ENCODE measurements at regions of chr18 and their contacts with region 1.

Region 1: DNA sequence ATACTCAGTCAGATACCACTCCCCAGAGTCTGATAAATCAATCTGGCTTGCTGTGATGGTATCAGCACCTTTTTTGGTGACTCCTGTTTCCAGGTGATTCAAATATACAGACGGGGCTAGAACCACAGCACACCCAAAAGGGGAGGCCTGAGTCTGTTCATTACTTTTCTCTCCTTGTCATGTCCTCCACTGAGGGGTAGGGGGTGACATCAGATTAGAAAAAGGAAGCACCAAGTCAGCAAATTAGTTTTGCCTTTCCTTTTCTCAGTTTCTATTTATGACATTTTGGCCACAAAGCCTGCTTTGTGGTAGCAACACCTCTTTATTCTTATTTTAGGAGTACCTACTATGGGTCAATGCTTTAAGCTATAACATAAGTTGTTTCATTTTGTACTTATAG is 127.4 kb downstream of the CCDC102B start:
- DNase-seq: peak; percentile 17
- H3K4me3 Mint-ChIP-seq: no peak overlapping the region
- H3K27ac Mint-ChIP-seq: no peak overlapping the region
- H3K4me1 Mint-ChIP-seq: no peaks in the 10 kb centered on the region
- H3K27me3 Mint-ChIP-seq: no peaks in the 10 kb centered on the region
- CTCF ChIP-seq: peak; percentile 36

Region 2: DNA sequence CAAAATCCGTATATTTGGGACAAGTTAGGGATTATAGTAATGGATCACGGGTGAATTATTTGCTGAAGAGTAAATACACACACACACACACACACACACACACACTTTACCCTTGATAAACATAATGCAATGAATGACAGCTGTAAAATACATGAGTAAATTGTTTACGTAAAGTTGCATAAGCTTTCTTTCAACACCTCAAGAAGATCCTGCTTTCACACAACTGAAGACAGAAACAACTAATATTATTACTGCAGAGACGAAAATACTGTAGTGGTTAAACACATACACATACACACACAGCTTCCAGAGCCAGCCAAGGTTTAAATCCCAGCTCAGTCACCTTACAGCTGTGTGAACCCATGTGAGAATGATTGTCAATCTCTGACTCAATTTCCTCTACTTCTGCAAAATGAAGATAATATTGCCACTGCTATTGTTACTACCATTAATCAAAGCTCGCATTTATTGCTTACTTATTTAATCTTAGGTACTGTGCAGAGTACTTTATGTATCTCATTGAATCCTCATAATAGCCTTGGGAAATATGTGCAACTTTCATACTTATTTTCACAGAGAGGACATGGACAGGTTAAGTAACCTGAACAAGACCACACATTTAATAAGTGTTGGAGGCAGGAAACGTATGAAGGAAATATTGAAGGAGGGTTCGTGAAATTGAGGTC is 424.8 kb after region 1 on chr18:
- CTCF ChIA-PET with region 1: no interaction called
- intact Hi-C with region 1: loop called (anchors 10 kb)
- DNase-seq: no peak
- H3K4me3 Mint-ChIP-seq: no peak overlapping the region
- H3K27ac Mint-ChIP-seq: no peak overlapping the region
- H3K4me1 Mint-ChIP-seq: no peaks in the 10 kb centered on the region
- H3K27me3 Mint-ChIP-seq: no peaks in the 10 kb centered on the region
- CTCF ChIP-seq: no peak

Region 3: DNA sequence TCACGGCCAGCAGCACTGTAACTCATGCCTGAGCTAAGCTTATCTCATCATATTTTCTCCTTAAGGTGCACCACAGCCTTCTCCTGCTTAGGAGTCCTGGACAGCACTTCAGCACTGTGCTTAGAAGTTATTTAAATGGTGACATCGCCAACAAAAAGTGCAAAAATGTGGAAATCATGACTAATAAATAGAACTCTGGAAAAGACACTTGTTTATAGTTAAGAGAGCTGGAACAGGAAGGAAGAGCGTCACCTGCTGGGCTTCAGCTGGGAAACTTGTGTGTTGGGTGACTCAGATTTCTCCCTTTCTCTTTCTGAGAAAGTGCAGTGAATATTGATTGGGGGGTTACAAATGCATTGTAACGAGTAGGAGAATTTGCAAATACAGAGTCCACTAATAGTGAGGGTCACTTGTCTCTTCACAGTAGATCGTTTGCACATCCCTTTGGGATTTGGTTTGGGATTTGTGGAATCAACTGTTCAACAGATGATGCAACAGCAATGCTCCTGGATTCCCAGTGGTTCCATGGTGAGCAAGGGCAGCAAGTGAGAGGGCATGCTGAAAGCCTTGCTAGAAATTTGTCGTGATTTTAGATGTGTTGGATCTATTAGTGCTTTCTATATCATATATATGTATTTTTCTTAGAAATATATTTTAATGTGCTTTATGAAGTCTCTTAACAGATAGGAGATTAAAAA is 559.6 kb after region 1 on chr18:
- CTCF ChIA-PET with region 1: no interaction called
- intact Hi-C with region 1: loop called (anchors 2 kb)
- DNase-seq: no peak
- H3K4me3 Mint-ChIP-seq: no peak overlapping the region
- H3K27ac Mint-ChIP-seq: peak overlapping the region; percentile 40
- H3K4me1 Mint-ChIP-seq: peaks cover 10% of the 10 kb centered on the region
- H3K27me3 Mint-ChIP-seq: no peaks in the 10 kb centered on the region
- CTCF ChIP-seq: no peak

Region 4: DNA sequence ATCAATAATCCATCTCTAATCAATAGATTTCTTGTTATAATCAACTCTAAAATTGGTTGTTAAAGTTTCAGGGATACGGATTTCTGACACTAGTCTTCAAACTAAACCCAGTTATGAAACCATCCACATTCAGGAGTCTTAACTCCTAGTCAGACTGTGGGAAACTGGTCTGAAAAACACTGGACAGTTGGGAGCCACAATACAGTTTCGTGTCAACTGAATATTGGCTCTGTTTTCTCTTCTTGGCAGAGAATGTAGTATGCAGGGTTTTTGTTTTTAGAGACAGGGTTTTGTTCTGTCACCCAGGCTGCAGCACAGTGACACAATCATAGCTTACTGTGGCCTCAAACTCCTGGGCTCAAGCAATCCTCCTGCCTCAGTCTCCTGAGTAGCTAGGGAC is 1157.2 kb after region 1 on chr18:
- CTCF ChIA-PET with region 1: no interaction called
- intact Hi-C with region 1: loop called (anchors 5 kb)
- DNase-seq: no peak
- H3K4me3 Mint-ChIP-seq: no peak overlapping the region
- H3K27ac Mint-ChIP-seq: no peak overlapping the region
- H3K4me1 Mint-ChIP-seq: no peaks in the 10 kb centered on the region
- H3K27me3 Mint-ChIP-seq: no peaks in the 10 kb centered on the region
- CTCF ChIP-seq: no peak